ENCODE measurements at regions of chr14 and their contacts with region 1.

Region 1: DNA sequence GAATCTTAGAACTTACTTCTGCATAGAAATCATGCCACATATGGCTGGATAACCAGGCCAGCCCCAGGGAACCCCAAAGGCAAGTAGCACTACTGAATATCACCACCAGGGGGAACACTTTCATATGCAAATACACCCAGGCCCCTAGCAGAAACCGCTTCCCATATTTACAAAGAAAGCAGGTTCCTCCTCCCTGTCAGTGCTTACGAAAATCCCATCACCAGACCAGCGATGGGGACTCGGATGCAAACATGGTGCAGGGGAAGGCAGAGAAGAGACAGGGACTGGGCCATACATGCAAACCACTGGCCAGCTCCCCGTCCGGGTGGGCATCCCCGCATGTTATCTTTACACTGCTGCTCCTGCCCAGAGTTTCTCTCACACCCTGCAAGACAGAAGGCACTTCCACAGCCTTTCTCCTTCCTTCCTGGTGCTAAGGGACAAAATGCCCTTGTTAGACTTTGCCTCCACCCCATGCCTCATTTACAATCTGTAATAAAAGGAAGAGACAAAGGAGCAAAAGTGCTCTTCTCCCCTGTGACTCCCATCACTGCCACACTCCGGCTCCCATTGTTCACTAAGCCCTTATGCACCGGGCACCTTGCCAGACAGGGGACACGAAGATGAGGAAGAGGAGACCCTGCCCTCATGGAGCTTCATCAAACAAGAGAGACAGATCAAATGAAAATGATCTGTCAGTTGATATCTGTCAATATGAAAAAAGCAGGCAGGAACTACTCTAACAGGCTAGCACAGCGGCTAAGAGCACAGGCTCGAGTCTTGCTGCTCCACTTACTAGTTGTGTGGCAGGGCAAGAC is 62.3 kb downstream of the PTPN21 start:
- DNase-seq: peak; percentile 81
- ATAC-seq: peak; percentile 96
- H3K4me3 ChIP-seq: no peak overlapping the region
- H3K27ac ChIP-seq: no peak overlapping the region
- H3K4me1 ChIP-seq: 0 out of 2 replicates have a peak, but pooled peaks cover 2% of the 10 kb centered on the region
- H3K27me3 ChIP-seq: no peaks in the 10 kb centered on the region
- CTCF ChIP-seq: peak; percentile 79
- POLR2A ChIP-seq: no peak
- RAD21 ChIP-seq: peak; percentile 66

Region 2: GRCh38 chr14:88323523-88324199 is 168.8 kb before region 1 on chr14:
- CTCF ChIA-PET with region 1: no interaction called
- POLR2A ChIA-PET with region 1: no interaction called
- dilution Hi-C with region 1: no loop called
- in situ Hi-C with region 1: no loop called
- intact Hi-C with region 1: no loop called
- DNase-seq: peak; percentile 1
- ATAC-seq: peak; percentile 67
- H3K4me3 ChIP-seq: peak overlapping the region; percentile 24; the same call in 1 of the 2 replicates
- H3K27ac ChIP-seq: no peak overlapping the region
- H3K4me1 ChIP-seq: peaks cover 3% of the 10 kb centered on the region; the same call in 1 of the 2 replicates
- H3K27me3 ChIP-seq: peaks cover 60% of the 10 kb centered on the region
- CTCF ChIP-seq: no peak
- POLR2A ChIP-seq: no peak
- RAD21 ChIP-seq: no peak

Region 3: GRCh38 chr14:88551094-88551870 is 58.8 kb after region 1 on chr14:
- CTCF ChIA-PET with region 1: no interaction called
- POLR2A ChIA-PET with region 1: no interaction called
- dilution Hi-C with region 1: no loop called
- in situ Hi-C with region 1: loop called (anchors 5 kb)
- intact Hi-C with region 1: no loop called
- DNase-seq: peak; percentile 82
- ATAC-seq: peak; percentile 68
- H3K4me3 ChIP-seq: peak overlapping the region; percentile 71
- H3K27ac ChIP-seq: peak overlapping the region; percentile 65
- H3K4me1 ChIP-seq: peaks cover 4% of the 10 kb centered on the region; the same call in 1 of the 2 replicates
- H3K27me3 ChIP-seq: no peaks in the 10 kb centered on the region
- CTCF ChIP-seq: peak; percentile 40
- POLR2A ChIP-seq: no peak
- RAD21 ChIP-seq: peak; percentile 39

Region 4: DNA sequence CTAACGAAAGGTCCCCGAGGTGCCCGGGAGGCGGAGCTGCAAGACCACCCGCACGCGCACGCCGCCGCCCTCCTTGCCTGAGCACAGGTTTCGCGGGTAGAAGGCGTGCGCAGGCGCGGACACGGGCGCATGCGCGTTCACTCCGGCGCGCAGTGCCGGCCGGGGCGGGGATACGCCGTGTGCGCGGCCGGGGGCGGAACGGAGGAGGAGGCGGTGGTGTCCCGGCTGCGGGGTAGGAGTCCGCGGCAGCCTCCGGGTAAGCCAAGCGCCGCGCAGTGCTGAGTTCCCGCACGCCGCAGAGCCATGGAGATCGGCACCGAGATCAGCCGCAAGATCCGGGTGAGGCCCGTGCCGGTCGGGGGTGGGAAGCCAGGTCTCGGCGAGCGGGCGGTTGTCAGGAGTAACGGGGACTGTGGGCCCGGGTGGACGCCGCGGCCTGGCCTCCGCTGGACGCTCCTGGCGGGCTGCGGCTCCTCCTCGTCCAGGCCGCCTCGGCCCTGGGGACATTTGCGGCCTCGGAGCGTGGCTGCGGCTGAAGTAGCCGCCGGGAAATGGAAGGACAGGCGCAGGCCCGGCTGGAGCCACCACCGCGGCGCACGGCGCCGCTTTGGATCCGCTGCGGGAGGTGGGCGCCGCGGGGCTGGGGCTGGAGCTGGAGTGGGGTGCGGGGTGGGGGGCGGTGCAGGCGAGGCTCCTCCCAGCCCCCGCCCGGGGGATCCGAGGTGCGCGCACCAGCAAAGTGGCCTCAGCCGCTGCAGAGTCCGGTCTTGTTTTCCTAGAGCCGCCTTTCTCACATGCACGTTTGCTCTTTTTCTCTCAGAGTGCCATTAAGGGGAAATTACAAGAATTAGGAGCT is 70.6 kb after region 1 on chr14 and contains the start of gene ZC3H14:
- CTCF ChIA-PET with region 1: interaction called, 7 read pairs
- POLR2A ChIA-PET with region 1: no interaction called
- dilution Hi-C with region 1: no loop called
- in situ Hi-C with region 1: no loop called
- intact Hi-C with region 1: loop called (anchors 1 kb)
- DNase-seq: peak; percentile 80
- ATAC-seq: peak; percentile 95
- H3K4me3 ChIP-seq: peak within 1 kb of the TSS; percentile 98
- H3K27ac ChIP-seq: peak within 1 kb of the TSS; percentile 94
- H3K4me1 ChIP-seq: peaks cover 6% of the 10 kb centered on the region; the same call in 1 of the 2 replicates
- H3K27me3 ChIP-seq: no peaks in the 10 kb centered on the region
- CTCF ChIP-seq: no peak
- POLR2A ChIP-seq: peak; percentile 61; the same call in 1 of the 2 replicates
- RAD21 ChIP-seq: no peak
- total RNA-seq, gene ZC3H14: 103 and 111 TPM in 2 replicates

Measured in IMR-90 (cell line).